MCF 10A (cell line): ENCODE measurements at regions of chr2 and their contacts with region 1.

Region 1: DNA sequence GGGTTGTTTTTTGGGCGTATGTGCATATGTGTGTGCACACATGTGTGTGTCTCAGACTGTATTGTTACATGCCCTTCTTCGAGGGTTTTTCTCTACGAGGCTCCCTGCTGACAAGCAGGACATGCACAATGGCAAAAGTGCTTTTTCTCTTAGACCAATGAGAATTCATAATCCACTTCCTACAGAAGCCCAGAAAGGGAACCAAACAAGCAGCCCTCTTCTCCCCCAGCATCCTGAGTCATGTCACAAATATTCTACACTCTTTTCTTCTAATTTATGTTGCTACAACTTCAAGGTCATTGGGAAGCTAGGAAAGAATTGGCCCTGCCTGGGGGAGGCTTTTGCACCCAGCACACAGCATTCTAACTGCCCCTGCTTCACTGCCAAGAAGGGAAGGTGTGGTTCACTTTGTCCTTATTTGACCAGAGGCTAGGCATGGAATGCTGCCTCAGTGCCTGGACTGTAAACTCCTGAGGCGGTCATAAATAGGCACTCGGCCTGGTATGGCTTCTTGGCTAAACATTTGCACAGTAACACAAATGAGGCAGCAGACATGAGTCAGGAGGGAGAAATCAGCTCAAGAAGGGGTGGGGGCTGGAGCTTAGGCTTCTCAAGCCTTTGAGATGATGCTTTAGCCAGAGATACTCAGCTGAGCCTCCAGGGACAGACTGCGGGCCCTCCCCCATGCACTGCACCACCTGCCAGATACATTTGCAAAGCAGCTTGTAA is 92.7 kb upstream of the KLF7 start:
- DNase-seq: peak; percentile 91
- H3K4me3 Mint-ChIP-seq: peak overlapping the region; percentile 26
- H3K27ac Mint-ChIP-seq: peak overlapping the region; percentile 84
- H3K4me1 Mint-ChIP-seq: peaks cover 65% of the 10 kb centered on the region
- H3K27me3 Mint-ChIP-seq: no peaks in the 10 kb centered on the region
- CTCF ChIP-seq: no peak

Region 2: DNA sequence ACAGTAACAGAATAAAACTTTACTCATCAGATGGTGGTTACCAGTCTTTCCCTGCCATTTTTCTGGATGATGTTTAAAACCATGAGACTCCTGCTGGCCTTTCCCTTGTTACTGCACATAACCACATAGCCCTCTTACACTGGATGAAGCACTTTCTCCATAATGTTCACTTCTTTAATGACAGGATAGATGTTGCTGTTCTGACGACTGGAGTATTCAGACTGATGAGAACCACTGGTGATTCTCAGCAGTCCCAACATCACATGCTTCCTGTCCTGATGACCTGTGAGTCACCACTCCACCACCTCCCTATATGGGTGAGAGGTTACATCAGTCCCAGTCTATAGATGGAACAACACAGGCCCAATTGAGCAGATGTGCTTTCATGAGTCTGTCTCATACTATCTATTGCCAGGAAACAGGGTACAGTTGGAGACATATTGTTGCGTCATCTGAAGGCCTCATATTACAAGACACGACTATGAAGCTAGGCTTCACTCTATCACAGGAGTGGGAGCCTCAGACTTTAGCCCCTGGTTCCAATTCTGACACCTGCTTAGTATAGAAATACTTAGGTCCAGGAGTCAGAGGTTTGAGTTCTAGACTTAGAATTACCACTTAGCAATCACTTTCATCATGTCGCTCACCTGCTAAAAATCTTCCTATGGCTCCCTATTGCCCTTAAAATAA is 53.0 kb after region 1 on chr2:
- CTCF ChIA-PET with region 1: no interaction called
- POLR2A ChIA-PET with region 1: interaction called, 4 read pairs
- intact Hi-C with region 1: loop called (anchors 2 kb)
- DNase-seq: peak; percentile 97
- H3K4me3 Mint-ChIP-seq: no peak overlapping the region
- H3K27ac Mint-ChIP-seq: peak overlapping the region; percentile 74
- H3K4me1 Mint-ChIP-seq: peaks cover 27% of the 10 kb centered on the region
- H3K27me3 Mint-ChIP-seq: no peaks in the 10 kb centered on the region
- CTCF ChIP-seq: peak; percentile 23

Region 3: GRCh38 chr2:207625018-207625907 is 366.8 kb after region 1 on chr2 and contains the start of gene METTL21A:
- CTCF ChIA-PET with region 1: no interaction called
- POLR2A ChIA-PET with region 1: no interaction called
- intact Hi-C with region 1: no loop called
- DNase-seq: peak; percentile 85
- H3K4me3 Mint-ChIP-seq: peak within 1 kb of the TSS; percentile 86
- H3K27ac Mint-ChIP-seq: peak within 1 kb of the TSS; percentile 74
- H3K4me1 Mint-ChIP-seq: peaks cover 25% of the 10 kb centered on the region
- H3K27me3 Mint-ChIP-seq: no peaks in the 10 kb centered on the region
- CTCF ChIP-seq: peak; percentile 25
- total RNA-seq, gene METTL21A: 8.4 and 13.5 TPM in 2 replicates